Calu3 (cell line): ENCODE measurements at regions of chr17 and their contacts with region 1.

Region 1: GRCh38 chr17:59641799-59642489 is 22.2 kb downstream of the CLTC start:
- DNase-seq: no peak
- H3K4me3 Mint-ChIP-seq: peak overlapping the region; percentile 41
- H3K27ac Mint-ChIP-seq: peak overlapping the region; percentile 38
- H3K4me1 Mint-ChIP-seq: peaks cover 21% of the 10 kb centered on the region
- H3K27me3 Mint-ChIP-seq: no peaks in the 10 kb centered on the region
- CTCF ChIP-seq: no peak

Region 2: DNA sequence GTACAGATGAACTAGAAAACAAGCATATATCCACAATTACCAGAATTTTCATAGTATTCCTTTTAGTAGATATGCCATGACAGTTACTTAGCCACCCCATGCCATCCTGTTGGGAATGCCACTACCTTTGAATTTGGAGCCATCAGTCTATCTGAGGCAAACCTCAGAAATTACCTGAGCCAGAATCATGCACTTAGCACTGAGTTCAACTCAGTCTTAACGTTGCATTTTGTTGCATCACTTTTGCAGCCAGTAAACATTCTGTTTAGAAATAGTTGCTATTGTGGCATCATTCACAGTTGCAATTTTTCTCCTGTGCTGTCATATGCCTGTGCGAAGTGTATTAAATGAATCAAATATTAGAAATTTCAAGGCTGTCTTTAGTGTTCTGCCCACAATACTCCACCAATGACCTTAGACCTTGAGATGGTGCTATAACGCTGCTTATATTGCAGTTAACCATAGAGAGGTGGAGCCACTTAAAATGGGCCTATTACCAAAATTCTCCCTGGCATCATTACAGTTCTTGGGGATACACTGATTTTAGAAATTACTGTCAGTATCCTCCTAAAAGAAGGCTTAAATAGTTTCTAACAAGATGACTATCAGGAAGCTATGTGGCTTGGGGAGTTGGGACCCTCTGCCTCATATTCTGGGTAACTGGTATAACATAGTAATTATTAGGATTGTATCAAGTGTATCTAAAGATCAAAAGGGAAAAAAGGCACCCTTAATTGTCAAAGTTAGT is 54.2 kb after region 1 on chr17:
- CTCF ChIA-PET with region 1: no interaction called
- intact Hi-C with region 1: loop called (anchors 10 kb)
- DNase-seq: no peak
- H3K4me3 Mint-ChIP-seq: no peak overlapping the region
- H3K27ac Mint-ChIP-seq: peak overlapping the region; percentile 66
- H3K4me1 Mint-ChIP-seq: peaks cover 11% of the 10 kb centered on the region
- H3K27me3 Mint-ChIP-seq: no peaks in the 10 kb centered on the region
- CTCF ChIP-seq: no peak